ENCODE measurements at regions of chr1 and their contacts with region 1.

Region 1: GRCh38 chr1:16366722-16367257 is at the start of gene SZRD1:
- DNase-seq: peak; percentile 98
- ATAC-seq: peak; percentile 91
- H3K4me3 Mint-ChIP-seq: peak within 1 kb of the TSS; percentile 95
- H3K27ac Mint-ChIP-seq: peak within 1 kb of the TSS; percentile 99
- H3K4me1 Mint-ChIP-seq: peaks cover 32% of the 10 kb centered on the region
- H3K27me3 Mint-ChIP-seq: no peaks in the 10 kb centered on the region
- total RNA-seq, gene SZRD1: 184 to 238 TPM

Region 2: DNA sequence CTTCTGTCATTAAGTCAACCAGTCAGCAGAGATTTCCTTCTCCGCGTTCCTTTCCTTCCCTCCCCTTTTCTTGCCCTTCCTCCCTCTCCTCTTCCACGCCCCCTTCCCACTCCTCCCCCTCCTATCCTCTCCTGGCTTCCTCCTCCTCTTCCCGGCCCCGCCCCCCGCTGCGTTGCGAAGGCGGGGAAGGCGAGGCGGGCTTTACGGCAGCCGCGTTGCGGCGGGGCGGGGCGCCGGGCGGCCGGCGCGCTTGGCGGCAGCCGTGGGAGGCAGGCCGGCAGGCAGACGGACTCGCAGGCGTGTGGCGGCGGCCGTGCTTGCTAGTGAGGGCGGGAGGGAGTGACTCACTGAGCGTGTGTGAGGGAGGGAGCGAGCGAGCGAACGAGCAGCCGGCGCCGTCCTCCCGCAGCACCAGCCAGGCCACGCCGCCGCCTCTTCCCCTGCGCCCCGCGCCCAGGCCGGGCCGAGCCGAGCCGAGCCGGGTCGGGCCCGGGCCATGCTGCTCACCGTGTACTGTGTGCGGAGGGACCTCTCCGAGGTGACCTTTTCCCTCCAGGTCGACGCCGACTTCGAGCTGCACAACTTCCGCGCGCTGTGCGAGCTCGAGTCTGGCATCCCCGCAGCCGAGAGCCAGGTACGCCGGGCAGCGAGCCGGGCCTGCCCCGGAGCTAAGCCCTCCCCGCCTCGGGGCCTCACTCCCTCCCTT is 749.5 kb before region 1 on chr1 and contains the start of gene DDI2:
- CTCF ChIA-PET with region 1: no interaction called
- POLR2A ChIA-PET with region 1: no interaction called
- intact Hi-C with region 1: loop called in 1 of 2 experiments (anchors 2 kb)
- DNase-seq: peak; percentile 98
- ATAC-seq: peak; percentile 89
- H3K4me3 Mint-ChIP-seq: peak within 1 kb of the TSS; percentile 94
- H3K27ac Mint-ChIP-seq: peak within 1 kb of the TSS; percentile 95
- H3K4me1 Mint-ChIP-seq: peaks cover 45% of the 10 kb centered on the region
- H3K27me3 Mint-ChIP-seq: no peaks in the 10 kb centered on the region
- total RNA-seq, gene DDI2: 30.2 to 34.0 TPM

Region 3: DNA sequence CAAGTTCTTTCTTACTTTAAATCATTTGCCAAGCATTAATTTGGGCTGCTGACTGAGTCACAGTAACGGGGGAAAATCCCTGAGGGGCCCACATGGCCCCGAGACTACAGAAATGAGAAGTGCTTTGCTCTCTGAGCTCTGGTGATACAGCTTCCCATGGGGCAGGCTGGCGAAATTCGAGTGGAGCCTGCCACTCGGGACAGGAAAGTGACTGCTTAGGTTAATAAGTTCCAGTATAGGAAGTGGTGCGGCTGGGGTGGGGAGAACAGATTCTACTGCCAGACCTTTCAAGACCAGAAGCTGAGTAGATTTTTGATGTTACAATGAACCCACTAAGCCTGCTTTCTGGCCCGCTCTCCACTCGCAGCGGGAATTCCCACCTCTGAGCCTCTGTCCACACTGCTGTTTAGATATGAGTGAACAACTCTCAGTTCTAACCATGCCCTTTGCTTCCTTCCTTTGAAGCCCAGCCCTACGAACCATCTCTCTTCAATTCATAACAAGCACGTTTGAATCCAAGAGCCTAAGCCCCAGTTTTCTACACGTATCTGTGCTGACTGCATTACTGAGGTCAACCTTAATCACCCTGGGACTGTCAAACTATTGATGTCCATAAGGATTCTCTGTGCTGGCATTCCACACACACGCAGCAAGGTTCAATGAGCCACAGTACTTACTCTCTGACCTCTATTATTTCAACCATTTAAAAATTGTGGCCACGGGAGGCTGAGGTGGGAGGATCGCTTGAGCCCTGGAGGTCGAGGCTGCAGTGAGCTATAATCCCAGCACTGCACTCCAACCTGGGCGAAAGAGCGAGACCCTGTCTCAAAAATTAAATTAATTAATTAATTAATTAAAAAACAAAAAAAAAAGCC is 400.5 kb before region 1 on chr1:
- CTCF ChIA-PET with region 1: no interaction called
- POLR2A ChIA-PET with region 1: no interaction called
- intact Hi-C with region 1: loop called in 1 of 2 experiments (anchors 1 kb)
- DNase-seq: peak; percentile 93
- ATAC-seq: peak; percentile 79
- H3K4me3 Mint-ChIP-seq: peak overlapping the region; percentile 54
- H3K27ac Mint-ChIP-seq: peak overlapping the region; percentile 98
- H3K4me1 Mint-ChIP-seq: peaks cover 83% of the 10 kb centered on the region
- H3K27me3 Mint-ChIP-seq: no peaks in the 10 kb centered on the region

Region 4: DNA sequence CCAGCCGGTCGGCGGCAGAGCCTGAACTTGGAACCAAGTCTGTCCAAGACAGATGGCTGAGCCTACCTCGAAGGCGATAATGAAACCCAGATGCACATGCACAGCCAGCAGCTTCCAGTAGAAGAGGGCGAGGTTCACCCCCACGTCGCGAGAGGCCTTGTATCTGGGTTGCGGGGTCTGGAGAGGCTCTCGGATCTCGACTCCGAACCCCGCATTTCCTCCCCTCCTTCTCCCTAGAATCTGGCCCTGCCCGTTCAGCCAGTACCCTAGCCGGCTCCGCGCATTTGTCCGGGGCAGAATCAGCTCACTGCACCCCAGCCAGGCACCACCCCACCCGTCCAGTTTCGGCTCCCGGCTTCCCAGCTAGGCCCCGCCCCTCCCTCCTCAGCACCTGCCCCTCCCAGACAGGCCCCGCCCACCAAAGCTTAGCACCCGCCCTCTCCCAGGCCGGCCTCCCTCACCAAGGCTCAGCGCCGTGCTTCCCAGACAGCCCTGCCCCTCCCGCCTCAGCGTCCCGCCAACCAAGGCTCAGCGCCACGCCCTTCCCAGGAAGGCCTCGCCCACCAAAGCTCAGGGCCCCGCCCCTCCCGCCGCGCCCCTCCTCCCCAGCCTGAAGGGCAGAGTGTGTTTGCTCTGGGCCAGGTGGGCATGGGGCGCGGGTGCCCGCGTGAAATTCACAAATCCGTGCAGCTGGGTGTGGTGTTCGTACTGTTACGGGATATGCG is 149.6 kb before region 1 on chr1:
- CTCF ChIA-PET with region 1: no interaction called
- POLR2A ChIA-PET with region 1: interaction called, 4 read pairs
- intact Hi-C with region 1: loop called in 1 of 2 experiments (anchors 1 kb)
- DNase-seq: peak; percentile 98
- ATAC-seq: peak; percentile 98
- H3K4me3 Mint-ChIP-seq: peak overlapping the region; percentile 73
- H3K27ac Mint-ChIP-seq: peak overlapping the region; percentile 20
- H3K4me1 Mint-ChIP-seq: peaks cover 20% of the 10 kb centered on the region
- H3K27me3 Mint-ChIP-seq: no peaks in the 10 kb centered on the region

Region 5: DNA sequence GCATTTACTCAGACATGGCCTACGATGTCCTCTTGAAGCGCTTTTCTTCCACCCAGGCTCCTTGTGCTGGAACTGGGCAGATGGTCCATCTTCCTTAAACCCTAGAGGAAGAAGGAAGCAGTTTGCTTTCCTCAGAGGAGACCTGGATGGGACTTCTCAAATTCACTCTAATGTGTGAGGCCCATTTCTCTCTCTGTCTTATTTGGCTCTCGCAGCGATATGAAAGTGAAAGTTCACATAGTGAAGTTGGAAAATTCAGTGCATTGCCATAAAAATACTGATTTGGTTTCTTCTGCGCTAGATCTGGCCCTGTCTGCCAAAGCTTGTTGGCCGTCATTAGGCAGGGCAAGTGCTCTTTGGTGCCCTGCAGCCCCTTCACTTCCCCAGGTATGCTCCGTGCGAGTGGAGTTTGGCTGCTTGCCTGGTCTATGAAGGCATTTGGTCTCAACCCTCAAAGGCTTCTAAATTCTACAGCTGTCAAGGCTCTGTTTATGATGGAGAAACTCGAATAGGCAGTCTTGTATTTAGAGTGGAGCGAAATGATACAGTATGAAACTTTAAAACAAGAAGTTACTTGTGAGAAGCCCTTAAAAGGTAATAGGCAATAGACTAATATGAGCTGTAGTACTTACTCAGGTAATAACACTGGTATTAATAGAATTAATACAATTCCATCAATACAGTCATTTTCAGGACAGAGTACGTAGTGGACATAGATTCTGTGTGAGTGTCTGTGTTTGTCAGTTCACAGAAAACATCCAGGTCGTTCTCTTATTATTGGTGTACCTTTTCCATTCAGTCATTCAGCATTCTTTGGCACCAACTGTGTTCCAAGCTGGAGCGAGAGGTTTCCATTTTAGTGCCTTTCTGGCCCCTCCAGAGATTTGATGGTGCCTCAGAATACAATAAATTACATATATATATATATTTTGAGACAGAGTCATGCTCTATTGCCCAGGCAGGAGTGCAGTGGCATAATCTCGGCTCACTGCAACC is 20.7 kb after region 1 on chr1:
- CTCF ChIA-PET with region 1: interaction called, 5 read pairs
- POLR2A ChIA-PET with region 1: interaction called, 6 read pairs
- intact Hi-C with region 1: loop called in 1 of 2 experiments (anchors 2 kb)
- DNase-seq: no peak
- ATAC-seq: peak; percentile 40
- H3K4me3 Mint-ChIP-seq: peak overlapping the region; percentile 61
- H3K27ac Mint-ChIP-seq: peak overlapping the region; percentile 56
- H3K4me1 Mint-ChIP-seq: peaks cover 77% of the 10 kb centered on the region
- H3K27me3 Mint-ChIP-seq: no peaks in the 10 kb centered on the region

Region 6: DNA sequence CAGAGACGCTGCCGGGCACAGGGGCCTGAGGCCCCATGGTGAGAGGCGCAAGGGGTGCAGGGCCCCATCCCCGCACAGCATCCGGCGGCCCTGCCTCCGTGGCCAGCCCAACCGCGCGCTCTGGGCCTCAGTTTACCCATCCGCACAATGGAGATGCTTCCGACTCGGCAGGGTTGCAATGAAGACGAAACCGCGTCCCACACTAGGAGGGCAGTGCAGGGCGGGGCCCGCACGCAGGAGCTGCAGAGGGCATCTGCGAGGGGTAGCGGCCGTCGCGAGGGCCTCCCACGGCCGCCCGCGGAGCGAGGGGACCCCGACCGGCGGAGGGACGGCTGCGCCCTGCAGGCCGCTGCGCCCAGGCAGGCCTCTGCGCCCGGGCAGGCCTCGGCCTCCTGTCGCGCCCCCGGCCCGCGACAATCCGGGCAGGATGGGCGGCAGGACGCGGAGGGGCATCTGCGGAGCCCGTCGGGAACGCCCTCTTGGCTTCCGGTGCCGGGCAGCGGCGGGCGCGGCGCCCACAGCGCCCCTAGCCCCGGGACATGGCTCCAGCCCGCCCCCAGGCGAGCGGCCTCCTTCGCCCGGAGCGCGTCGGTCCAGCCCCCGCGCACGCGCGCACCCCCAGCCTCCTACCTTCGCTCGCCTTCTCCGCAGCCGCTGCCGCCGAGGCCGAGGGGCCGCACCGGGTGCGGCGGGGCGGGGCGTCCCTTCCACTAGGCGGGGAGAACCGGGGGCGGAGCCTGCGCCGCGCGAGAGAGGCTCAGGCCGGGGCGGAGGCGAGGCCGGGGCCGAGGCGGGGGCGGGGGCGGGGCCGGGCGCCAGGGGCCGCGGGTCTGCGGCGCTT is 132.0 kb after region 1 on chr1:
- CTCF ChIA-PET with region 1: no interaction called
- POLR2A ChIA-PET with region 1: no interaction called
- intact Hi-C with region 1: loop called in 1 of 2 experiments (anchors 1 kb)
- DNase-seq: peak; percentile 91
- ATAC-seq: peak; percentile 94
- H3K4me3 Mint-ChIP-seq: peak overlapping the region; percentile 74
- H3K27ac Mint-ChIP-seq: no peak overlapping the region
- H3K4me1 Mint-ChIP-seq: peaks cover 10% of the 10 kb centered on the region
- H3K27me3 Mint-ChIP-seq: no peaks in the 10 kb centered on the region

Region 7: DNA sequence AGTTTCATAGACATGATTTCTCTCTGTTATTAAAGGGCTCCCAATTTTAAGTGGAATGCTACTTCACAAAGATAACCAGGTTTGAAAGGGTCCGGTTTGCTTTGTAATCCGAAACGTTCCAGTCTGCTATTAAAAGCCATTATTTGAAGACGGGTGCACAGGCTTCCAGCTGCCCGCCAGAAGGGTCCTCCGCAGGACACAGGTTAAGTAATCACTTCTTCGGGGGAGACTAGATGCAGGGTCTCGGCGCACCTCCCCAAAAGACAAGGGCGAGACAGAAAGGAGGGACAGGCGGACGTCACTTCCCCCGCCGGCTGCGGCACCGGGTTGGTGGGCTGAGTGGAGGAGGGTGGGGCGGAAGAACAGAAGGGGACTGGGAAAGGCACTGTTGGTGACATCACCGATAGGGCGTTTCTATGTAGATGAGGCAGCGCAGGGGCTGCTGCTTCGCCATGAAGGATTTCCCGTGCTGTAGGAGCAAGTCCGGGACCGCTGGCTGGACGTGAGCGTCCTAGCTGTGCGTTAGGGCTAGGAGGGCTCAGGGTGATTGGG is 537.8 kb after region 1 on chr1:
- CTCF ChIA-PET with region 1: no interaction called
- POLR2A ChIA-PET with region 1: interaction called, 4 read pairs
- intact Hi-C with region 1: loop called in 1 of 2 experiments (anchors 2 kb)
- DNase-seq: peak; percentile 100
- ATAC-seq: peak; percentile 90
- H3K4me3 Mint-ChIP-seq: no peak overlapping the region
- H3K27ac Mint-ChIP-seq: no peak overlapping the region
- H3K4me1 Mint-ChIP-seq: peaks cover 30% of the 10 kb centered on the region
- H3K27me3 Mint-ChIP-seq: no peaks in the 10 kb centered on the region

Measured in activated CD4-positive, alpha-beta T cell treated with anti-CD3 and anti-CD28 coated beads for 36 hours (primary cell).